Dendritic cell treated with granulocyte-macrophage colony-stimulating factor and Interleukin-4, amounts not matched to agents 40 ng/mL and 50 ng/mL, for 4 days (primary cell): ENCODE measurements at regions of chr1 and their contacts with region 1.

Region 1: GRCh38 chr1:182143154-182143657 is 81.7 kb upstream of the ZNF648 start:
- H3K4me3 Mint-ChIP-seq: peak overlapping the region; percentile 39
- H3K27ac Mint-ChIP-seq: peak overlapping the region; percentile 98
- H3K4me1 Mint-ChIP-seq: peaks cover 47% of the 10 kb centered on the region
- H3K27me3 Mint-ChIP-seq: no peaks in the 10 kb centered on the region

Region 2: DNA sequence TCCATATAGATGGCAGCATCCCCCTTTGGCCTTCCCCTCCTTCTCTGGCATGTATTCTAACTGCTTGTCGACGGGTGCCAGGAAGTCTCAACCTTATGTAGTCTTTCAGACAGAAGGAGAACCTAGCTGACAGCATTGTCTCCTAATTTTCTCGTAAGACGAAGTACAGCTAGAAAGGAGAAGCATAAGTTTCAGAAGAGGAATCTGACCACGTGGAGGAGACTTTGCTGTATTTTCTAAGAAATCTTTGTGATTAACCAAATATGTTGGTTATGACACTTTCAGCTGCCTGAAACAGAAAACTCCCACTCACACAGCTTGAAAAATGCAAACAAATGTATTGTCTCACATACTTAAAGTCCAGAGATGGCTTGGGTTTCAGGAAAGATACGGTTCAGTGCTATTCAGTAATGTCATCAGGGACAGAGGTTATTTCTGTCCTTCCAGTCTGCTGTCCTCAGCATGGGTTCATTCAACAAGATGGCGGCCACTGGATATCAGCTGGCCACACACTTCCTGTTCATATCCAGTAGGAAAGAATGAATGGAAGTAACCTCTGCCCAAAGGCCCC is 27.8 kb after region 1 on chr1:
- intact Hi-C with region 1: loop called (anchors 2 kb)
- H3K4me3 Mint-ChIP-seq: peak overlapping the region; percentile 25
- H3K27ac Mint-ChIP-seq: peak overlapping the region; percentile 94
- H3K4me1 Mint-ChIP-seq: peaks cover 44% of the 10 kb centered on the region
- H3K27me3 Mint-ChIP-seq: no peaks in the 10 kb centered on the region

Region 3: GRCh38 chr1:182198049-182198501 is 54.9 kb after region 1 on chr1:
- intact Hi-C with region 1: loop called (anchors 2 kb)
- H3K4me3 Mint-ChIP-seq: no peak overlapping the region
- H3K27ac Mint-ChIP-seq: peak overlapping the region; percentile 73
- H3K4me1 Mint-ChIP-seq: peaks cover 30% of the 10 kb centered on the region
- H3K27me3 Mint-ChIP-seq: no peaks in the 10 kb centered on the region